Esophagus squamous epithelium (tissue), 5 donors: ENCODE measurements at regions of chr17 and their contacts with region 1.

Region 1: GRCh38 chr17:50949989-50950881 is 84.1 kb upstream of the TOB1 start:
- DNase-seq: peak; percentile 31
- H3K4me3 ChIP-seq: peak overlapping the region in 2 of 4 donors; percentile 7 to 48
- H3K27ac ChIP-seq: peak overlapping the region; percentile 84 to 95 (median 92)
- H3K4me1 ChIP-seq: peaks cover 37 to 72% (median 48%) of the 10 kb centered on the region in 3 donors
- H3K27me3 ChIP-seq: no peaks in the 10 kb centered on the region
- CTCF ChIP-seq: peak; percentile 25 to 78 (median 69)
- POLR2A ChIP-seq: no peak

Region 2: DNA sequence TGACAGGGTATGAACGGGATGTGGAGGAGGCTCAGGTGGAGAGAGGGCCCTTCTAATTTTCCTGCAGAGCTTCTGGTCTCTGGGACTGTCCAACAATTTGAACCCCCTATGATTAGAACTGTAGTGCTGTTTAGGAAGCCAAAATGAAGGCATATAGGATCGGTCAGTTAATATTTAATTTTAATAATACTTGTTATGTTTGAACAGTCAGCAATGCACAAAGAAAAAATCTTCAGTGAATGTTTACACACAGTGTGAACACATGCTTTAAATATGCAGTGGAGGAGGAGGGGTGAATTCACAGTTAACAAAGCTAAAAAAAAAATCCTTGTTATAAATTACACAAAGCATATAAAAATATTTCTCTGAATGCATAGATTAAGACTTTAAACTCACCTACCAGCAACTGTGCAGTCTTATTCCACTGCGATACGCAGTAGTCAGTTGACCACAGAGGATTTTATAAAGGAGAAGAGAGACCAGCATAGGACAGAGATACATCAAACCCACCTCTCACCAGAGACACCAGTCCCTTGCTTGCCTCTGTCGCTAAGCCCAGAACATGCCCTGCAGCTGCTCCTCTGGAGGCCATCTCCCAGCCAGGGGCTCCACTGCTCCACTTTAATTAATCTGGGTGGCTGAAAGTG is 257.1 kb before region 1 on chr17:
- intact Hi-C with region 1: no loop called
- DNase-seq: no peak
- H3K4me3 ChIP-seq: no peak overlapping the region
- H3K27ac ChIP-seq: no peak overlapping the region
- H3K4me1 ChIP-seq: peaks cover 15 to 77% (median 26%) of the 10 kb centered on the region in 3 donors
- H3K27me3 ChIP-seq: no peaks in the 10 kb centered on the region
- CTCF ChIP-seq: no peak
- POLR2A ChIP-seq: no peak

Region 3: DNA sequence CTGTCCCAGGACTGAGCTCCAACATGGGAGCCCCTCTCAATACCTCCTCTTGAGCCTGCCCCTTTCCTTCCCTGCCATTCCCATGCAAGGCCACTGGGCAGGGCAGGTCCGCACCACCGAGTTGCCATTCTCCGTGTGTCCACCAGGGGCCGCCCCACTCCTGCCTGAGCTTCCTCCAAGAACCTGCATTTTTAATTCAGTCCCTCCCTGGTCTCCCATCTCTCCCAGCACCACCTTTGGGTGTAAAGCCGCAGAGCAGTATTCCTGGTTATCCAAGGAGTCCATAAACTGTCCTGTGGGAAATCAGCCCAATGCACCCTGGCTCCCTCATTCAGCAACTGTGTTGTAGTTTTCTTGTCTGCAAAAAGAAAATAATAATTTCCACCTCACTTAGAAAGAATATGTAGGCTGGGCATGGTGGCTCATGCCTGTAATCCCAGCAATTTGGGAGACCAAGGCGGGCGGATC is 167.0 kb before region 1 on chr17:
- intact Hi-C with region 1: loop called (anchors 10 kb)
- DNase-seq: peak; percentile 24
- H3K4me3 ChIP-seq: no peak overlapping the region
- H3K27ac ChIP-seq: no peak overlapping the region
- H3K4me1 ChIP-seq: peaks cover 14 to 50% (median 30%) of the 10 kb centered on the region in 3 donors
- H3K27me3 ChIP-seq: no peaks in the 10 kb centered on the region
- CTCF ChIP-seq: peak; percentile 85 to 100 (median 99)
- POLR2A ChIP-seq: no peak

Region 4: DNA sequence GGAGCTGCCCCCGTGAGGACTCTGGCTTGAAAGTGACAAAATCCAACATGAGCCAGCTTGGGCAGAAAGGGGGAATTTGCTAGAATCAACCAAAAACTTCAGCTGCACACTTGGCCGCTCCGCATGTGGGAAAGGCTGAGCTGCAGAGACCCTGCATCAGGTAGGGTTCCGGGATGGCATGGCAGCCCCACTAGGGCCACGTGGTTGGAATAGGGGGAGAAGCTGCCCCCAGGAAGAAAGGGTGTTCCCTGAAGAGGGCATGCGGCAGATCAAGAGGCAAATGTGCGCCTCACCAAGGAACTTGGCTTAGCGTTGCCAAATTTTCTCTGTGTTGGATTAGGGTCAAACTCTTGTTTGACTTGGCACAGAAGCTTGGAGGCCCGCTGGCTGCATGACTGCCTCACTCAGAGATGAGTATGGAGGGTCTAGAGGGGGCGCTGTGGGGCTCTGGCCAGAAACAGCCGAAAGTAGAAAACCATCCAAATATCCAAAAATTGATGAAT is 144.0 kb before region 1 on chr17:
- intact Hi-C with region 1: no loop called
- DNase-seq: no peak
- H3K4me3 ChIP-seq: no peak overlapping the region
- H3K27ac ChIP-seq: no peak overlapping the region
- H3K4me1 ChIP-seq: peaks cover 0 to 31% (median 10%) of the 10 kb centered on the region in 3 donors
- H3K27me3 ChIP-seq: no peaks in the 10 kb centered on the region
- CTCF ChIP-seq: no peak
- POLR2A ChIP-seq: no peak

Region 5: DNA sequence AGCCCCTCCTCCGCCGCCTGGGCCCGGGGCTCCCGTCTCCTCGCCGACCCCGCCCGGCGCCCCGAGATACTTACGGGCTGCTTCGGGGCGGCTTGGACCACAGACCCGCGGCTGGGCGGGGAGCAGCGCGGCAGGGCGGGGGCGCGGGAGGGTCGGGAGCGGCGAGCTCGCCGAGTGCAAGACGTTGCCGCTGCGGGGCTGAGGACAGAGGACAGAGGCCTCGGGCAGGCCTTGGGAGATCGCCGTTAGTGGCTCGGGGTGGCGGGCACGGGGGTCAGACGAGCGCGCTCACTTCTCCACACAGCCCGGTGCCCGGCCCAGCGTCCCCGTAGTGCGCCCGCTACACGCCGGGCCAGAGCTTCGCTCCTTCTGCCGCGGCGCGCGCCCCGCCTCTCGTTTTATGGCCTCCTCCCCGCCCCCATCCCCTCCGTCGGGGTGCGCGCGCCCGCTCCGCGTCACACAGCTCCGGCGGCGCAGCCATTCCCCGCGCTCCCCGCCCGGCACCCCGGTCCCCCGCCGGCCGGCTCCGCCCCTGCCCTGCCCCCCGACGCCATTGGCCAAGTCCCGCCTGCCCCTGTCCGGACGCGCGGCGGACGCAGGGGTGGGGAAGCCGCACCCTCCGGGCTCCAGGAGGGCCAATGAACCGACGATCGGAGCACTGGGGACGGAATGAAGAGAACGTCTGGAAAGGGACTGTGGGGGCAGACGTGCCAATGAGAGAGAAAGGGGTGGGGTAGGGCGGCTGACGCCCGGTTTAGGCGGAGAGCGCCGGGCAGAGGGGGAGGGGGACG is 84.1 kb before region 1 on chr17 and contains the start of gene TOB1:
- intact Hi-C with region 1: loop called (anchors 5 kb)
- DNase-seq: peak; percentile 78
- H3K4me3 ChIP-seq: peak within 1 kb of the TSS; percentile 92 to 99 (median 97)
- H3K27ac ChIP-seq: peak within 1 kb of the TSS; percentile 96 to 100 (median 100)
- H3K4me1 ChIP-seq: peaks cover 7 to 61% (median 18%) of the 10 kb centered on the region in 3 donors
- H3K27me3 ChIP-seq: no peaks in the 10 kb centered on the region
- CTCF ChIP-seq: no peak
- POLR2A ChIP-seq: peak; percentile 56 to 100 (median 100)
- total RNA-seq, gene TOB1: 21.5 to 35.9 (median 31.1) TPM

Region 6: GRCh38 chr17:50976951-50977472 is 26.8 kb after region 1 on chr17:
- intact Hi-C with region 1: no loop called
- DNase-seq: no peak
- H3K4me3 ChIP-seq: no peak overlapping the region
- H3K27ac ChIP-seq: peak overlapping the region in 1 of 4 donors; percentile 10
- H3K4me1 ChIP-seq: no peaks in the 10 kb centered on the region
- H3K27me3 ChIP-seq: no peaks in the 10 kb centered on the region
- CTCF ChIP-seq: no peak
- POLR2A ChIP-seq: no peak

Region 7: GRCh38 chr17:51132964-51133319 is 182.7 kb after region 1 on chr17:
- intact Hi-C with region 1: no loop called
- DNase-seq: no peak
- H3K4me3 ChIP-seq: no peak overlapping the region
- H3K27ac ChIP-seq: peak overlapping the region in 1 of 4 donors; percentile 10
- H3K4me1 ChIP-seq: peaks cover 0 to 10% (median 5%) of the 10 kb centered on the region in 3 donors
- H3K27me3 ChIP-seq: no peaks in the 10 kb centered on the region
- CTCF ChIP-seq: no peak
- POLR2A ChIP-seq: no peak